ENCODE measurements at regions of chr9 and their contacts with region 1.

Region 1: DNA sequence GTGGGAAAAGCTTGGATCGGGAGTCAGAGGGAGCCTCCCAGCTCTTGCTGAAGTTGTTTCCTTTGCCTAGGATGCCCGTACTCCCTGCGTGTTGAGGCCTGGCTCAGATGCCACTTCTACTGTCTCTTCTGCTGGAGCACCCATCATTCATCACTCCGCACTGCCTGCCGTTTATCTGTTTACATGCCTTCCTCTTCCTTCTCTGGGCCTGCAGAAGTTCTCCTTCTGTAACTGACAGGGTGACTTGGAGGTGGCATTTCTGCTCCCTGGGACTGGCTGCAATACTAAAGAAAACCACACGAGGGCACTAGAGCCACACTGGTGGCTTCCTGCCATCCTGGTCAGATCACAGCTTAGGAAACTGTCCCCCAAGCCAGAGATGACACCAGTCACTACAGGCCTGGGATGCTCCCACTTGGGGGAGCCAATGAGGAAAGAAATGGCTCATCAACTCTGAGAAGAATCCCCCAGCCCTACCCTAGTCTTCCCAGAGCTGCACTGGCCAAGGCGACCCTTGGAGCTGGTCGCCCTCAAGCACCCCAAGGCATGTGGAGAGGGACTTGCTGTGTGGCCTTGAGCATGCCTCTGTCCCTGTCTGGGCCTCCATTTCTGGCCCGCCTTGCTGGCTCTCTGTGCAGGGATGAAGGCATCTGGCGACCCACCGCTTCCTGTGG is 9.7 kb upstream of the SLC25A51 start:
- DNase-seq: peak; percentile 68 to 97 (median 92)

Region 2: GRCh38 chr9:37963936-37964739 is 50.5 kb after region 1 on chr9:
- intact Hi-C with region 1: loop called (anchors 10 kb)
- DNase-seq: peak; percentile 61 to 95 (median 83)

Region 3: GRCh38 chr9:38068866-38069629 is 155.4 kb after region 1 on chr9 and contains the start of gene SHB:
- intact Hi-C with region 1: loop called (anchors 1 kb)
- DNase-seq: peak; percentile 39 to 94 (median 86)

Region 4: DNA sequence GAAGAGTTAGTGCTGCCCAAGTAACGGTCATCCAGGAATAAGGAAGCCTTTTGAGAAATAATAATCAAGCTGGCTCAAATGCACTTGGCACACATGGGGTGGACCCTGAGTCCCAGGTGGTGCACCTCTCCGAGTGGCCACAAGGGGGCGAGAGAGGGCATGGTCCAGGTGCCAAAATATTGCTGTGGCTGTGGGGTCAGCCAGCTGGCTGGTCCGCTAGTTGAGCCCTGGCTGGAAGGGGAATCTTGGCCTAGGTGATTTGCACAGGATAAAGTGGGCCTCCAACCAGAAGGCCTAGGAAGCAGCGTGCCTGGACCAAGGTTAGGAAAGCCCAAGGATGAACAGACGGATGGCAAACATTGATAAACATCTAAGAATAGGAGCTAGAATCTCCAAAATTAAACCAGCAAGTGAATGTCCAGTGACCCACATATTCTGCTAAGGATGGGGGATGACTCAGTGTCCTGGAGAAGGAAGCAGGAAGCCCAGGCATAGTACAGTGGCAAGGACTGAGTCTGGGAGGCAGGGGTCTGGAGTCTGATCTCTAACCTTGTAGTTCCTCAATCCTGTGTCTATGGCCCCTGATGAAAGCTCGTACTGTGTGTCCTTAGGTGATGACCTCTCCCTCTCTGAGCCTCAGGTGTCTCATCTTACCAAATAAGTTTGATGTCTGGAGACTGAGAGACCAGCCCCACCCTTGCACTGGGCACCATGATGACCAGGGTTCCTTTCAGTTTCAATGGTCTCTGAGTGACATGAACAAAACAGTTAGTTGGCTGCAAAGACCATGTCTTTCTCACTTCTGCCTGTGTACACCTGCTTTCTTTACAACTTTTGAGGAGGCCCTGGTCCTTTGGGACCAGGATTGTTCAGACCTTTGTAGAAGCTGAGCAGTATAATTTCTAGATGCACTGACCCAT is 174.6 kb after region 1 on chr9:
- intact Hi-C with region 1: loop called (anchors 5 kb)
- DNase-seq: peak; percentile 51 to 94 (median 86)

Region 5: GRCh38 chr9:38362852-38363593 is 449.4 kb after region 1 on chr9:
- intact Hi-C with region 1: loop called (anchors 5 kb)
- DNase-seq: peak in 30 of 42 donors; percentile 7 to 70 (median 39)

Measured in head of caudate nucleus (tissue), 42 donors.